RWPE1 (cell line): ENCODE measurements at regions of chr14 and their contacts with region 1.

Region 1: GRCh38 chr14:96255501-96256366 is at the start of gene BDKRB1:
- DNase-seq: peak; percentile 67
- H3K27ac ChIP-seq: peak within 1 kb of the TSS; percentile 96
- CTCF ChIP-seq: no peak

Region 2: DNA sequence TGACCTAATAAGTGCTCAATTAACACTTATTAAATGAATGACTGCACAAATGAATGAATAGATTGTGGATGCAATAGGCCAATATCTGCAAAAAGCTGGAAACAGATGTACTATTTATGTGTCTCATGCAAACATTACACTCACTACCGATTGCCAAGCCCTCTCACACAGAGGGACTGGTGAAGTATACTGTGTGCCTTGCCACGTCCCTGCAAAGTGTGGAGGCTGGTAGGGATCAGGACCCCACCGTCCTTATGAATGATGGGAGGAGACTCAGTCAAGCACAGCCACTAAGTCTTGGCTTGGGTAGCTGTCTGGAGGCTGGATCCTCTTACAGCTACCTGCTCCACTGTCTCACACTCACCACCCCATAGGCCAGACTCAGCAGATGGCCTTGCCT is 383.0 kb before region 1 on chr14:
- CTCF ChIA-PET with region 1: interaction called, 14 read pairs
- POLR2A ChIA-PET with region 1: no interaction called
- DNase-seq: no peak
- H3K27ac ChIP-seq: no peak overlapping the region
- CTCF ChIP-seq: no peak